Gastrocnemius medialis (tissue), 4 donors: ENCODE measurements at regions of chr1 and their contacts with region 1.

Region 1: GRCh38 chr1:61337981-61338848 is 255.9 kb downstream of the NFIA start:
- DNase-seq: peak; percentile 74 to 81
- ATAC-seq: peak; percentile 87 to 92
- H3K4me3 ChIP-seq: peak overlapping the region; percentile 32 to 41 (median 38)
- H3K27ac ChIP-seq: peak overlapping the region; percentile 75 to 83 (median 78)
- H3K4me1 ChIP-seq: peaks cover 33 to 35% of the 10 kb centered on the region in 2 donors
- H3K27me3 ChIP-seq: no peaks in the 10 kb centered on the region
- CTCF ChIP-seq: peak; percentile 70 to 86 (median 78)
- POLR2A ChIP-seq: no peak

Region 2: DNA sequence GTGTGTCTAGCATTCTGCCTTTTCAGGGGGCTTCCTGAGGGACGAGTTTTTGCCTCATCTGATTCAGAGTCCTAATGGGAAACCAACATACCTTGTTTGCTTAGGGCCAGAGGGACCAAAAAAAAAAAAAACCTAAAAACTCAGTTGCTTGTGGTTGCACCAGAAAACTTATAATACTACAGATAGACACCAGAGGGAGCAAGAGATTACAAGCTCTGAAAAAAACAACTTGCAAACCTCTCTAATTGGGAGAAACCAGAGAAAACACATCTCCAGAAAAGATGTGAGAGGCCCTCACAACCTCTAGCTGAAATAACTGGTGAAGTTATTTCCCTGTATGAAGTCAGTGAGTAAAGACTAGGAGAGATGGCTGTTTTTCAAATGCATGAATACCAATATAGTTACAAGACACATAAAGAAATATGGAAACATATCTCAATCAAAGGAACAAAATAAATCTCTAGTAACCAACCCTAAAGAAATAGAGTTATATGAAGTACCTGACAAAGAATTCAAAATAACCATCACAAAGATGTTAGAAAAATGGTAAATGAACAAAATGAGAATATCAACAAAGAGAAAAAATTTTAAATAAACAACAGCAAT is 489.5 kb before region 1 on chr1:
- in situ Hi-C with region 1: loop called in 1 of 4 experiments (anchors 25 kb)
- intact Hi-C with region 1: loop called (anchors 5 kb)
- DNase-seq: no peak
- ATAC-seq: no peak
- H3K4me3 ChIP-seq: no peak overlapping the region
- H3K27ac ChIP-seq: no peak overlapping the region
- H3K4me1 ChIP-seq: no peaks in the 10 kb centered on the region
- H3K27me3 ChIP-seq: no peaks in the 10 kb centered on the region
- CTCF ChIP-seq: peak; percentile 51 to 63 (median 57)
- POLR2A ChIP-seq: no peak

Region 3: DNA sequence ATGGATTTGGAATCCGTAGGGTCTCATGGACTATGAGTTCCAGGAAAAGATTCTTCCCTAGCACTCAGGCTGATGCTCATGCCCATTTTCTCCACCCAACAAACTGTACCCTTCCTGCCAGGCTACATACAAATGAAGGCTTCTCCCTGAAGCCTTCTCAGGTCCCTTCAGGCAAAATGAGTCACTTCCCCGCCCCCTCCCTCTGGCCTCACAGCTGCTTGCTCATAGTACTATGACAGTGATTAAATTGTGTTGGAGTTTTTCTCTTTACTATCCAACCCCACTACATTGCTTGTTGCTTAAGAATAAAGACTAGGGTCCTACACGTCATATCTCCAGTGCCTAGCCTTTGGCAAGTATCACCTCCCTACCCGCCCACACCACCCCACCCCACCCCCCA is 463.5 kb before region 1 on chr1:
- in situ Hi-C with region 1: loop called in 1 of 4 experiments (anchors 25 kb)
- intact Hi-C with region 1: no loop called
- DNase-seq: peak in 1 of 2 donors; percentile 21
- ATAC-seq: peak; percentile 62 to 70
- H3K4me3 ChIP-seq: no peak overlapping the region
- H3K27ac ChIP-seq: no peak overlapping the region
- H3K4me1 ChIP-seq: no peaks in the 10 kb centered on the region
- H3K27me3 ChIP-seq: no peaks in the 10 kb centered on the region
- CTCF ChIP-seq: no peak
- POLR2A ChIP-seq: no peak

Region 4: GRCh38 chr1:61077676-61078541 is 260.3 kb before region 1 on chr1:
- in situ Hi-C with region 1: loop called in 2 of 4 experiments (anchors 10 to 25 kb)
- intact Hi-C with region 1: loop called (anchors 2 kb)
- DNase-seq: peak; percentile 84 to 88
- ATAC-seq: peak; percentile 47 to 55
- H3K4me3 ChIP-seq: peak overlapping the region; percentile 58 to 96 (median 73)
- H3K27ac ChIP-seq: peak overlapping the region; percentile 82 to 96 (median 92)
- H3K4me1 ChIP-seq: peaks cover 32 to 39% of the 10 kb centered on the region in 2 donors
- H3K27me3 ChIP-seq: no peaks in the 10 kb centered on the region
- CTCF ChIP-seq: no peak
- POLR2A ChIP-seq: peak in 1 of 2 donors; percentile 17

Region 5: DNA sequence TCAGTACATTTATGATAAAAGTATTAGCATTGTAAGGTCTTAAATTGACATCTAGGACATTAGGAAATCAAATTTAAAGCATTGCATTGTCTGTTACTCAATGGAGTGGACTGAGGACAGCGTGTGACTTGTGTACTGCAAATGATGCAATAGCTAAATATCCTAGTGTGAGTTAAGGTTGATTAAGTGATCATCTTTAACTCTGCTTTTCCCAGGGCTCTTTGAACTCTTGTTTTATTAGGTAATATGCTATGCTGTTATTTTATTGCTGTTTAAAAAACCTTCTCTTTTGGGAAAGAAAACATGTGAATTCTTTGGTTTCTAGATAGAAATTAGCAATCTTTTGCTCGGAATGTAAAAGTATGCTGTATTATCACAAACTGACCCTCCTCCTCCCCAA is 217.2 kb before region 1 on chr1:
- in situ Hi-C with region 1: no loop called
- intact Hi-C with region 1: loop called (anchors 5 kb)
- DNase-seq: peak; percentile 32 to 45
- ATAC-seq: peak; percentile 79 to 81
- H3K4me3 ChIP-seq: peak overlapping the region; percentile 35 to 46 (median 45)
- H3K27ac ChIP-seq: peak overlapping the region; percentile 81 to 93 (median 88)
- H3K4me1 ChIP-seq: peaks cover 86 to 91% of the 10 kb centered on the region in 2 donors
- H3K27me3 ChIP-seq: no peaks in the 10 kb centered on the region
- CTCF ChIP-seq: peak in 1 of 5 experiments; percentile 9
- POLR2A ChIP-seq: peak in 1 of 2 donors; percentile 9

Region 6: DNA sequence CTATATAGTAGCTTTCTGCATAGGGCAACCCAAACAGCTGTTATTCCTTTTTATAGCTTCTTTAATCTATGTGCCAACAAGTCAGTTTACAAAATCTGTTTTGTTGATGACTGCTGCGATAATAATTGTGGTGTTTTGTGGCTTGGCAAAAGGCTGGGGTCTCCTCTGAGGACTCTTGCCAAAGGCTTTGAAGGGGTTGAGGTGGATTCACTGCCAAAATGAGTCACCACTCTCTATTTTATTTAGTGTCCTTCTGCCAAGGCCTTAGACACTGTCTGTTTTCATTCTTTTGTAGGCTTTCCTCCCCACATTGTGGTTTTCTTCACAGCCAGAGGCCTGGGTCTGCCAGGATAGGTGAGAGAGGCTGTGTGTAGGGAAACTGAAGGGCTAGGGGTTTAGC is 94.1 kb before region 1 on chr1:
- in situ Hi-C with region 1: no loop called
- intact Hi-C with region 1: loop called (anchors 2 kb)
- DNase-seq: peak in 1 of 2 donors; percentile 31
- ATAC-seq: peak; percentile 23 to 58
- H3K4me3 ChIP-seq: no peak overlapping the region
- H3K27ac ChIP-seq: peak overlapping the region; percentile 83 to 89 (median 86)
- H3K4me1 ChIP-seq: peaks cover 69% of the 10 kb centered on the region in 2 donors
- H3K27me3 ChIP-seq: no peaks in the 10 kb centered on the region
- CTCF ChIP-seq: no peak
- POLR2A ChIP-seq: no peak

Region 7: GRCh38 chr1:61518670-61519400 is 180.6 kb after region 1 on chr1:
- in situ Hi-C with region 1: no loop called
- intact Hi-C with region 1: no loop called
- DNase-seq: no peak
- ATAC-seq: no peak
- H3K4me3 ChIP-seq: no peak overlapping the region
- H3K27ac ChIP-seq: no peak overlapping the region
- H3K4me1 ChIP-seq: no peaks in the 10 kb centered on the region
- H3K27me3 ChIP-seq: no peaks in the 10 kb centered on the region
- CTCF ChIP-seq: no peak
- POLR2A ChIP-seq: no peak